ENCODE measurements at regions of chr1 and their contacts with region 1.

Region 1: DNA sequence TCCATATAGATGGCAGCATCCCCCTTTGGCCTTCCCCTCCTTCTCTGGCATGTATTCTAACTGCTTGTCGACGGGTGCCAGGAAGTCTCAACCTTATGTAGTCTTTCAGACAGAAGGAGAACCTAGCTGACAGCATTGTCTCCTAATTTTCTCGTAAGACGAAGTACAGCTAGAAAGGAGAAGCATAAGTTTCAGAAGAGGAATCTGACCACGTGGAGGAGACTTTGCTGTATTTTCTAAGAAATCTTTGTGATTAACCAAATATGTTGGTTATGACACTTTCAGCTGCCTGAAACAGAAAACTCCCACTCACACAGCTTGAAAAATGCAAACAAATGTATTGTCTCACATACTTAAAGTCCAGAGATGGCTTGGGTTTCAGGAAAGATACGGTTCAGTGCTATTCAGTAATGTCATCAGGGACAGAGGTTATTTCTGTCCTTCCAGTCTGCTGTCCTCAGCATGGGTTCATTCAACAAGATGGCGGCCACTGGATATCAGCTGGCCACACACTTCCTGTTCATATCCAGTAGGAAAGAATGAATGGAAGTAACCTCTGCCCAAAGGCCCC is 109.5 kb upstream of the ZNF648 start:
- DNase-seq: peak in 1 of 4 experiments; percentile 34
- ATAC-seq: peak; percentile 50; the same call in 2 of the 3 replicates
- H3K4me3 ChIP-seq: no peak overlapping the region
- H3K27ac ChIP-seq: peak overlapping the region; percentile 59; the same call in 2 of the 3 replicates
- H3K4me1 ChIP-seq: peaks cover 0 to 20% of the 10 kb centered on the region in 2 experiments; a peak in 3 of 5 replicates
- H3K27me3 ChIP-seq: peaks cover 0 to 2% of the 10 kb centered on the region in 2 experiments; a peak in 1 of 5 replicates
- CTCF ChIP-seq: no peak
- EP300 ChIP-seq: no peak
- POLR2A ChIP-seq: no peak
- RAD21 ChIP-seq: peak; percentile 6 to 9; a peak in 1 of 4 replicates

Region 2: GRCh38 chr1:182181167-182181682 is 10.2 kb after region 1 on chr1:
- CTCF ChIA-PET with region 1: no interaction called
- POLR2A ChIA-PET with region 1: interaction called, 19 read pairs
- in situ Hi-C with region 1: no loop called
- intact Hi-C with region 1: no loop called
- DNase-seq: no peak
- ATAC-seq: no peak
- H3K4me3 ChIP-seq: no peak overlapping the region
- H3K27ac ChIP-seq: no peak overlapping the region
- H3K4me1 ChIP-seq: no peaks in the 10 kb centered on the region
- H3K27me3 ChIP-seq: peaks cover 4 to 30% of the 10 kb centered on the region in 2 experiments; a peak in 4 of 5 replicates
- CTCF ChIP-seq: no peak
- EP300 ChIP-seq: no peak
- POLR2A ChIP-seq: no peak
- RAD21 ChIP-seq: no peak

Region 3: DNA sequence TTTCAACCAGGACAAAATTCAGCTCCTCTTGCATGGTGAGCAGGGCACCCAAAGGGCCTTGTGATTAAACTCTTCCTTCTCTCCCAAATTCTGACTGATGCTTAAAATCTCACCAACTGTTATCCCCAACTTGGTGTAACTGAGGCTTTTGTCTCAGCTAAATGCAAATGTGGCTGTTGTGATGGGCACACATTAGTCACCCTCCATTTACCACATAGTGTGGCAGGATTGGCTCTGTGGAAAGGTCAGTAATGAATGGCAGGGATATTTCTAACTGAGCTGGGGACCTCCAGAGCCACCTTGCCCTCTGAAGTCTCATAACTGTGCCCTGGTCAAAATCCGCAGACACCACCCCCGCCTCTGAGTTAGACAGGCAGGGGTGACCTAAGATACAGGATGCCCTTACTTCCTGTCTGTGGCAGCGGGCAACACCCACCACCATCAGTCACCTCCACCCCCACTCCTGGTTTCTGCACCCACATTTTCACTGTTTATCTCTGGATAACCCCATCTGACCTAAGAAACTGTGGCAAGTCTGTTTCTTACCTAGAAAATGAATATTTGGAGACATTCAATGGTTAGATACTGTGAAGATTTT is 458.6 kb after region 1 on chr1:
- CTCF ChIA-PET with region 1: no interaction called
- POLR2A ChIA-PET with region 1: no interaction called
- in situ Hi-C with region 1: no loop called
- intact Hi-C with region 1: no loop called
- DNase-seq: no peak
- ATAC-seq: no peak
- H3K4me3 ChIP-seq: no peak overlapping the region
- H3K27ac ChIP-seq: no peak overlapping the region
- H3K4me1 ChIP-seq: no peaks in the 10 kb centered on the region; a peak in 1 of 5 replicates
- H3K27me3 ChIP-seq: peaks cover 16 to 34% of the 10 kb centered on the region in 2 experiments
- CTCF ChIP-seq: no peak
- EP300 ChIP-seq: no peak
- POLR2A ChIP-seq: no peak
- RAD21 ChIP-seq: no peak